ENCODE measurements at regions of chrX and their contacts with region 1.

Region 1: GRCh38 chrX:85544609-85545008 is 165.1 kb upstream of the POF1B start:
- DNase-seq: no peak
- H3K4me3 ChIP-seq: no peak overlapping the region
- H3K27ac ChIP-seq: no peak overlapping the region
- H3K4me1 ChIP-seq: no peaks in the 10 kb centered on the region
- H3K27me3 ChIP-seq: no peaks in the 10 kb centered on the region
- CTCF ChIP-seq: peak in 4 of 6 experiments; percentile 26 to 46 (median 33)
- POLR2A ChIP-seq: no peak

Region 2: GRCh38 chrX:85089321-85089840 is 455.2 kb before region 1 on chrX:
- intact Hi-C with region 1: no loop called
- DNase-seq: no peak
- H3K4me3 ChIP-seq: no peak overlapping the region
- H3K27ac ChIP-seq: no peak overlapping the region
- H3K4me1 ChIP-seq: no peaks in the 10 kb centered on the region
- H3K27me3 ChIP-seq: no peaks in the 10 kb centered on the region
- CTCF ChIP-seq: no peak
- POLR2A ChIP-seq: no peak

Region 3: DNA sequence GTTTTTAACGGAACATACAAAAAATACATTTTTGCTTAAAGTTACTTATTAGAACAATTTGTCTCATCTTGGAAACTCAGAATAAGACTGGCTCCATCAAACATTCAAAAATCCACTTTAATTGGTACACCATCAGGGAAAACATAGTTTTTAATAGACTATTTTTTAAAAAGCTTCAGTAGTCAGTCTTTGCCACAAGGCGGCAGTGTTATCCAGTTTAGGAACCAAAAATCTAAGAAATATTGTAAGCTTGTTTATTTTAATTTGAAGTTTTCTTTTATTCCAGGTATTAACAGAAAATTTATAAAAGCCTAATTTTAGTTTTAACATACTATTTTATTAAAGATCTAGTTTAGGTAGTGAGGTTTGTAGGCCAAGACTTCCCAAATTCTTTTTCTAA is 433.3 kb before region 1 on chrX:
- intact Hi-C with region 1: loop called (anchors 10 kb)
- DNase-seq: no peak
- H3K4me3 ChIP-seq: no peak overlapping the region
- H3K27ac ChIP-seq: no peak overlapping the region
- H3K4me1 ChIP-seq: no peaks in the 10 kb centered on the region
- H3K27me3 ChIP-seq: no peaks in the 10 kb centered on the region
- CTCF ChIP-seq: peak in 5 of 6 experiments; percentile 17 to 67 (median 55)
- POLR2A ChIP-seq: no peak

Measured in esophagus squamous epithelium (tissue), 5 donors.